GM10248 (cell line): ENCODE measurements at regions of chr16 and their contacts with region 1.

Region 1: GRCh38 chr16:57341441-57342303 is 16.9 kb upstream of the CCL22 start:
- DNase-seq: no peak
- CTCF ChIP-seq: no peak

Region 2: DNA sequence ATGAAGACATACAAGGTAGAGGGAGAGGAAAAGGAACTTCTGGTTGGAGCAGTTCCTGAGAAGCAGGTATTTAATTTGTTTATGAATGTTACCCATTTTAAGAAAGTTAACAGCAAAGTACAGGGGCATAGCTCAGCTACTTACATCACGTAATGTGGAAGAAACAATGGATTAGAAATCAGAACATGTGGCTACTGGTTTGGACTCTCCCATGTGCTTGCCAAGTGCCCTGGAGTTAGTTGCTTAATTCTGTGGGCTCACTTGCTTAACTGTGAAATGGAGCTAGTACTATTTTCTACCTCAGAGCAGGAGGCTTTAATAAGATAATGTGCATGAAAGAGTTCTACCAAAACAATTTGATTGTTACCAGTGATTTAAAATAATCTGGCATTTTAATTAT is 128.2 kb before region 1 on chr16:
- CTCF ChIA-PET with region 1: no interaction called
- POLR2A ChIA-PET with region 1: no interaction called
- DNase-seq: no peak
- CTCF ChIP-seq: no peak

Region 3: GRCh38 chr16:57352636-57353047 is 11.0 kb after region 1 on chr16:
- CTCF ChIA-PET with region 1: interaction called, 16 read pairs
- POLR2A ChIA-PET with region 1: no interaction called
- DNase-seq: no peak
- CTCF ChIP-seq: no peak

Region 4: DNA sequence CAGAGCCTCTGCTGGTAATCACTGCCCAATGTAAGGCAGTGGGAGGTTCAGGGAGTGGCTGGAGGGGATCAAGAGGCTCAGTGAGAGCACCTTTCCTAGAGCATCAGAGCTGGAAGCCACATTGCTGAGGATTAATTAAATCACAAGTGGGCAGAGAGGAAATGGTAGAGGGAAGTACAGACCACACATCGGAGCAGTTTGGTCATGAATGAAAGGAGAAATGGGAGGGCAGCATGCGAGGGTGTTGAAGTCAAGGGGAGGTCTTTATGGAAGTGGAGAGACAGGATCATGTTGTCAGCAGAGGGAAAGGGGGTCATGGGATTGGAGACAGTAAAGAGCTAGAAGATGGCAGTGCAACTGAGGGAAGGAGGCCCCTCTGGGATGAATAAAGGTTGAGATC is 65.2 kb after region 1 on chr16:
- CTCF ChIA-PET with region 1: no interaction called
- POLR2A ChIA-PET with region 1: no interaction called
- DNase-seq: no peak
- CTCF ChIP-seq: no peak